ENCODE measurements at regions of chr16 and their contacts with region 1.

Region 1: DNA sequence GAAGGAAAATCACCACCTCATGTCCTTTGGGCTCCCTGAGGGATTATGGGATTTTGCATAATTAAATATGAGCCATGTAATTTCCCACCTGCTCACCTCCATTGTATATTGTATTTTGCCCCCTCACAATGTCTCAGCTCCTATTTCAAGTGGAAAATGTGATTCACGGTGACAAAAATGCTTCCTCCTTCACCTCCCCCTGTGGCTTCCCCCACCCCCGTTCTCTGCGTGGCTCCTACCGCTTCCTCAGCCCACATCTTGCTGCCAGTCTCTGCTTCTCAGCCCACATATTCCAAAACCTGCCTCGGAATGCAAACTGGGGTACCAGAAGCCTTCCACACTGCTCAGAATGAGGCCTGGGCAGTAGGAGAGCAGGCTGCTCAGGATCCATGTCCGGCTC is 394.5 kb upstream of the C16orf82 start:
- DNase-seq: no peak
- H3K4me3 ChIP-seq: no peak overlapping the region
- H3K27ac ChIP-seq: no peak overlapping the region
- H3K4me1 ChIP-seq: no peaks in the 10 kb centered on the region
- H3K27me3 ChIP-seq: peaks cover 37% of the 10 kb centered on the region
- CTCF ChIP-seq: no peak

Region 2: GRCh38 chr16:26583803-26584202 is 88.4 kb before region 1 on chr16:
- CTCF ChIA-PET with region 1: no interaction called
- POLR2A ChIA-PET with region 1: interaction called, 13 read pairs
- intact Hi-C with region 1: no loop called
- DNase-seq: no peak
- H3K4me3 ChIP-seq: no peak overlapping the region
- H3K27ac ChIP-seq: no peak overlapping the region
- H3K4me1 ChIP-seq: no peaks in the 10 kb centered on the region
- H3K27me3 ChIP-seq: no peaks in the 10 kb centered on the region
- CTCF ChIP-seq: no peak

Region 3: GRCh38 chr16:26688105-26688504 is 15.9 kb after region 1 on chr16:
- CTCF ChIA-PET with region 1: no interaction called
- POLR2A ChIA-PET with region 1: no interaction called
- intact Hi-C with region 1: no loop called
- DNase-seq: no peak
- H3K4me3 ChIP-seq: no peak overlapping the region
- H3K27ac ChIP-seq: no peak overlapping the region
- H3K4me1 ChIP-seq: no peaks in the 10 kb centered on the region
- H3K27me3 ChIP-seq: peaks cover 29% of the 10 kb centered on the region
- CTCF ChIP-seq: no peak